ENCODE measurements at regions of chr16 and their contacts with region 1.

Region 1: DNA sequence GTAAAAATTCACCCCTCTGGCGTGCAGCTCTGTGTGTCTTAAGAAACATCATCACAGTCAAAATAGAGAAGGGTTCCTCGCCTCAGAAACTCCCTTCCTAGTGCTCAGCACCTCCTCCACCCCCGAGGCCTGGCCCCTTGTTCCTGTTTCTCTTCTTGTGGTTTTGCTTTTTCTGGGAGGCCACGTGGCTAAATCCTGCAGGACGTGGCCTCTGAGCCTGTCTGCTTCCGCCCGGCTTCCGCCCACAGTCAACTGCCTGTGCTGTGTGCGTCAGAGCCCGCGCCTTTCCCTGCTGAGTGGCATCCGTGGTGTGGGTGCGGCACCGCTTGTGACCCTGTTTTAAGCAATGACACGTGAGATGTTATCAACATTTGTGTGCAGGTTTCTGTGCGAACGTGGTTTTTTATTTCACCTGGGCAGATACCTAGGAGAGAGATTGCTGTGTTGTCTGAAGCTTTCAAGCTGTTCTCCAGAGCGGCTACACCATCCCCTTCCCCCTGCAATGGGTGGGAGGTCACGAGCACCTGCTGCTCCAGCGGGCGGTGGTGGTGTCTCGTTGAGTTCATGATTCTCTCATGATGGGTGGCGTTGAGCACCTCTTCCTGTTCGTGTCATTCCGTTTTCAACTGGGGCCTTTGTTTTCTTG is 21.7 kb downstream of the ACSF3 start:
- DNase-seq: peak; percentile 94 to 97 (median 96)
- H3K4me3 ChIP-seq: peak overlapping the region in 6 of 7 experiments; percentile 1 to 72 (median 56)
- H3K27ac ChIP-seq: peak overlapping the region; percentile 52 to 81
- H3K4me1 ChIP-seq: peaks cover 10 to 80% (median 77%) of the 10 kb centered on the region in 4 experiments
- H3K27me3 ChIP-seq: no peaks in the 10 kb centered on the region

Region 2: DNA sequence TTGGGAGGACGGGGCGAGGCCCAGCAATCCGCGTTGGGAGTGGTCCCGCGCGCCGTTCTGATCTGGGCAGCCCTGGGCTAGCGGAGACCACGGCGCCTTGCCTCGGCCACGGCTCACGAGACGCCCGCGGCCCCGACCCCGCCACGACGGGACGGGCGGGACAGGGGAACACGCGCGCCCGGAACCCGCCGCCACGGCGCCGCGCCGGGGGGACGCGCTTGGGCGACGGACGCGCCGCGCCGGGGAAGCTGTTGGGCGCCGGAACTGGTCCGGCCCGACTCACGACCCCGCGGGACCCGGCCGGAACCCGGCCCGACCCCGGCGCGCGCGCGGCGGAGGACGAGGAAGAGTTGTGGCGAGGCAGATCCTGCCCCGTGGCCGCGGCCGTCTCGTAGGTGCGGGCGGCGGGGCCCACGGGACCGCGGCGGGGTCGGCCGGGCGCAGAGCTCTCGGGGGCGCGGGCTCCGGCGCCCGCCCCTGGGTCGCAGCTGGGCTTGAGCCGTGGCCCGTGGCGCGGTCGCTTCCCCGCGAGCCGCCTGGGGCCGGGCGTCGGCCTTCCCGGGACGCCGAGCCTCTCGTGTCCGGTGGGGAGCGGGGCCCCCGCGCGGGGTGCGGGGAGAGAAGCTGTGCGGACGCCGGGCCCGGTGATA is 21.6 kb before region 1 on chr16 and contains the start of gene ACSF3:
- CTCF ChIA-PET with region 1: interaction called, 9 read pairs
- POLR2A ChIA-PET with region 1: interaction called, 10 read pairs
- DNase-seq: peak; percentile 53 to 62 (median 60)
- H3K4me3 ChIP-seq: peak within 1 kb of the TSS; percentile 70 to 88 (median 77)
- H3K27ac ChIP-seq: peak within 1 kb of the TSS; percentile 33 to 77
- H3K4me1 ChIP-seq: peaks cover 14 to 51% (median 49%) of the 10 kb centered on the region in 4 experiments
- H3K27me3 ChIP-seq: peaks cover 0 to 7% (median 1%) of the 10 kb centered on the region in 5 experiments

Region 3: DNA sequence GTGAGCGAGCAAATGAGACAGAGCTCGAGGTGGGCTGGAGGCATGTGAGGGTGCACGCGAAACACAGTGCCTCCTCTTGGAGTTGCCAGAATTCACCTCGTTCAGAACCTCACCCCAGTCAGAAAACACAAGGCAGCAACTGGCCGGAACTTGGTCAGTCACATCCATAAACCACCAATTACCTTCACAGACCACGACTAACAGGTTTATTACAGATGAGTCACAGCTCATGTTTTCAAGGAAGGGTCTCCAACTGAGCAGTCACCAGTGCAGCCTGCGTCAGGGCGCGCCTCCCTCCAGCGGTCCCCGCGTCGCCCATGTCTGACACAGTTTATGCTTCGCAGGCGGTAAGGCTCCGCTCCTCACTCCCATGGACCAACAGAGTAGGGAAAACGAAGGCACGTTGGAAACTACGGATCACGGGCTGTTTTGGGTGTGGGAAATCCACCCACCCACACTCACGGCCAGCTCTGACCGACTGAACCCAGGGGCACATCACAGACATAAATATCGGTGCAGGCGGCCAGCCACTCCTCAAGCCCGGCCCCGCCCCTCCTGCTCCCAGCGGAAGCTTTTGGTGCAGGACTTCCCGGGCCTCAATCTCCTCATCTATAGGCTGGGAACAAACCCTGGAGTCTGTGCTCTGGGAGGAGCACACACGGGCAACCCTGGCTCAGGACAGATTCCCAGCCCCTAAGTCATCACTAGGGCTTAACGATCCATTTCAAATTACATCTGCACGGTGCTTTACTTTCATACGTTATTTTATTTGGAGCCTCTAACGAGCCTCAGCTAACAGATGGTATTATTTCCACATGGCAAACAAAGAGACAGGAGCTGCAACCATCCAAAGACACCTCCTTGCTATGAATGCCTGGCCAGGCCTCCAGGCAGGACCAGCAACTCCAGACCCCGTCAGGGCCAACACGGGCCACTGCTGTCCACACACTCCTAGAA is 228.4 kb after region 1 on chr16:
- CTCF ChIA-PET with region 1: no interaction called
- POLR2A ChIA-PET with region 1: no interaction called
- DNase-seq: no peak
- H3K4me3 ChIP-seq: no peak overlapping the region
- H3K27ac ChIP-seq: no peak overlapping the region
- H3K4me1 ChIP-seq: peaks cover 0 to 3% (median 0%) of the 10 kb centered on the region in 4 experiments
- H3K27me3 ChIP-seq: no peaks in the 10 kb centered on the region